GM12878 (cell line): ENCODE measurements at regions of chr9 and their contacts with region 1.

Region 1: GRCh38 chr9:21709464-21710058 is 92.9 kb upstream of the MTAP start:
- DNase-seq: no peak
- ATAC-seq: peak; percentile 82
- H3K4me3 ChIP-seq: no peak overlapping the region
- H3K27ac ChIP-seq: no peak overlapping the region
- H3K4me1 ChIP-seq: no peaks in the 10 kb centered on the region
- H3K27me3 ChIP-seq: no peaks in the 10 kb centered on the region
- CTCF ChIP-seq: peak; percentile 68 to 88 (median 85)
- EP300 ChIP-seq: no peak
- POLR2A ChIP-seq: no peak
- RAD21 ChIP-seq: peak; percentile 57

Region 2: GRCh38 chr9:21244836-21245235 is 464.7 kb before region 1 on chr9:
- CTCF ChIA-PET with region 1: no interaction called
- POLR2A ChIA-PET with region 1: no interaction called
- RAD21 ChIA-PET with region 1: no interaction called
- SMC1A ChIA-PET with region 1: no interaction called
- in situ Hi-C with region 1: no loop called
- intact Hi-C with region 1: no loop called
- DNase-seq: no peak
- ATAC-seq: peak; percentile 55
- H3K4me3 ChIP-seq: no peak overlapping the region
- H3K27ac ChIP-seq: no peak overlapping the region
- H3K4me1 ChIP-seq: peaks cover 1% of the 10 kb centered on the region; the same call in 1 of the 2 replicates
- H3K27me3 ChIP-seq: no peaks in the 10 kb centered on the region; a peak in 1 of 4 replicates
- CTCF ChIP-seq: no peak
- EP300 ChIP-seq: no peak
- POLR2A ChIP-seq: no peak
- RAD21 ChIP-seq: no peak

Region 3: GRCh38 chr9:21281275-21281674 is 428.3 kb before region 1 on chr9:
- CTCF ChIA-PET with region 1: no interaction called
- POLR2A ChIA-PET with region 1: no interaction called
- RAD21 ChIA-PET with region 1: no interaction called
- SMC1A ChIA-PET with region 1: no interaction called
- in situ Hi-C with region 1: no loop called
- intact Hi-C with region 1: no loop called
- DNase-seq: no peak
- ATAC-seq: no peak
- H3K4me3 ChIP-seq: no peak overlapping the region
- H3K27ac ChIP-seq: no peak overlapping the region
- H3K4me1 ChIP-seq: no peaks in the 10 kb centered on the region
- H3K27me3 ChIP-seq: peaks cover 0 to 2% of the 10 kb centered on the region in 2 experiments; a peak in 1 of 4 replicates
- CTCF ChIP-seq: no peak
- EP300 ChIP-seq: no peak
- POLR2A ChIP-seq: no peak
- RAD21 ChIP-seq: no peak

Region 4: GRCh38 chr9:21481470-21482056 is 228.0 kb before region 1 on chr9:
- CTCF ChIA-PET with region 1: no interaction called
- POLR2A ChIA-PET with region 1: no interaction called
- RAD21 ChIA-PET with region 1: no interaction called
- SMC1A ChIA-PET with region 1: no interaction called
- in situ Hi-C with region 1: no loop called
- intact Hi-C with region 1: loop called (anchors 5 kb)
- DNase-seq: no peak
- ATAC-seq: peak; percentile 34; the same call in 2 of the 3 replicates
- H3K4me3 ChIP-seq: no peak overlapping the region
- H3K27ac ChIP-seq: no peak overlapping the region
- H3K4me1 ChIP-seq: peaks cover 3% of the 10 kb centered on the region; the same call in 1 of the 2 replicates
- H3K27me3 ChIP-seq: no peaks in the 10 kb centered on the region; a peak in 1 of 4 replicates
- CTCF ChIP-seq: no peak
- EP300 ChIP-seq: no peak
- POLR2A ChIP-seq: no peak
- RAD21 ChIP-seq: no peak

Region 5: DNA sequence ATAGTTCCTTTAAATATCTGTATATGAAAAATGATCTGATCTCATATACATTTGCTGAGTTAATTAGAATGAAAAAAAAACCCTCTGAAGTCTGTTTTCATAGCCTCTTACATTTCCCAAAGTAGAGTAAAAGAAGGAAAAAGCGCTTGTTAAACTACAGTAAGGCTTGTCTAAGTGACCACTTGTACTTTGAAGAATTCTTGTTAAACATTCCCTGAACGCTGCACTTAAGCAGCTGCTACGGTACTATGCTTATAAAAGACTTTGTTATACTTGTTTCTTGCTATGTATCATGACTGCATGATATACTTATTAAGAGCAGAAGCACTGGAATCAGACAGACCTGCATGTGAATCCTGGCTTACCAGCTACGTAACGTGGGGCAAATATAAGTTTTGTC is 11.2 kb after region 1 on chr9:
- CTCF ChIA-PET with region 1: interaction called, 11 read pairs
- POLR2A ChIA-PET with region 1: no interaction called
- RAD21 ChIA-PET with region 1: no interaction called
- SMC1A ChIA-PET with region 1: no interaction called
- in situ Hi-C with region 1: no loop called
- intact Hi-C with region 1: no loop called
- DNase-seq: no peak
- ATAC-seq: no peak
- H3K4me3 ChIP-seq: no peak overlapping the region
- H3K27ac ChIP-seq: no peak overlapping the region
- H3K4me1 ChIP-seq: no peaks in the 10 kb centered on the region
- H3K27me3 ChIP-seq: no peaks in the 10 kb centered on the region
- CTCF ChIP-seq: no peak
- EP300 ChIP-seq: no peak
- POLR2A ChIP-seq: no peak
- RAD21 ChIP-seq: no peak

Region 6: DNA sequence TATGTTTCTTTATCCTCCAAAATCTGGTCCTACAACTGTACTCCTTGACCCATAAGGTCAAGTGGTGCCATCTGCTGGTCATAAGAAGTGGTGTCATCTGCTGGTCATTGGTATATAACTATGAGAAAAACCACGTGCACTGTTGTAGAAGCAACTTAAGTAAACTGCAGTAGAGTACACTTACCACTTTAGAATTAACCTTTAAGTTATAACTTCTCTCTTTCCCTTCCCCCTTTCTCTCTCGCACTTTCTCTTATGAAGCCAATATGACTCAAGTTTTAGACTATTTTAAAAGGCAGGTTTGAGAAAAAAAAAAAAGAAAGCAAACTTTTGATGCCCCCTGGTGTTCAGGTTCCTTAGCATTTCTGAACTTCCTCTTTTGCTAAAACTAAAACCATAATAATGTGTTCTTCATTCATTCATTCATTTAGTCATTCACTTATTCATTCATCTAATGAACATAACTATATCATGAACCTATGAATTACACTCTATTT is 80.0 kb after region 1 on chr9:
- CTCF ChIA-PET with region 1: interaction called, 16 read pairs
- POLR2A ChIA-PET with region 1: no interaction called
- RAD21 ChIA-PET with region 1: interaction called, 5 read pairs
- SMC1A ChIA-PET with region 1: interaction called, 6 read pairs
- in situ Hi-C with region 1: no loop called
- intact Hi-C with region 1: loop called (anchors 1 kb)
- DNase-seq: peak; percentile 40
- ATAC-seq: peak; percentile 100
- H3K4me3 ChIP-seq: no peak overlapping the region
- H3K27ac ChIP-seq: no peak overlapping the region
- H3K4me1 ChIP-seq: no peaks in the 10 kb centered on the region
- H3K27me3 ChIP-seq: peaks cover 0 to 5% of the 10 kb centered on the region in 2 experiments; a peak in 2 of 4 replicates
- CTCF ChIP-seq: peak; percentile 63 to 72 (median 66)
- EP300 ChIP-seq: no peak
- POLR2A ChIP-seq: no peak
- RAD21 ChIP-seq: peak; percentile 74